ENCODE measurements at regions of chr16 and their contacts with region 1.

Region 1: DNA sequence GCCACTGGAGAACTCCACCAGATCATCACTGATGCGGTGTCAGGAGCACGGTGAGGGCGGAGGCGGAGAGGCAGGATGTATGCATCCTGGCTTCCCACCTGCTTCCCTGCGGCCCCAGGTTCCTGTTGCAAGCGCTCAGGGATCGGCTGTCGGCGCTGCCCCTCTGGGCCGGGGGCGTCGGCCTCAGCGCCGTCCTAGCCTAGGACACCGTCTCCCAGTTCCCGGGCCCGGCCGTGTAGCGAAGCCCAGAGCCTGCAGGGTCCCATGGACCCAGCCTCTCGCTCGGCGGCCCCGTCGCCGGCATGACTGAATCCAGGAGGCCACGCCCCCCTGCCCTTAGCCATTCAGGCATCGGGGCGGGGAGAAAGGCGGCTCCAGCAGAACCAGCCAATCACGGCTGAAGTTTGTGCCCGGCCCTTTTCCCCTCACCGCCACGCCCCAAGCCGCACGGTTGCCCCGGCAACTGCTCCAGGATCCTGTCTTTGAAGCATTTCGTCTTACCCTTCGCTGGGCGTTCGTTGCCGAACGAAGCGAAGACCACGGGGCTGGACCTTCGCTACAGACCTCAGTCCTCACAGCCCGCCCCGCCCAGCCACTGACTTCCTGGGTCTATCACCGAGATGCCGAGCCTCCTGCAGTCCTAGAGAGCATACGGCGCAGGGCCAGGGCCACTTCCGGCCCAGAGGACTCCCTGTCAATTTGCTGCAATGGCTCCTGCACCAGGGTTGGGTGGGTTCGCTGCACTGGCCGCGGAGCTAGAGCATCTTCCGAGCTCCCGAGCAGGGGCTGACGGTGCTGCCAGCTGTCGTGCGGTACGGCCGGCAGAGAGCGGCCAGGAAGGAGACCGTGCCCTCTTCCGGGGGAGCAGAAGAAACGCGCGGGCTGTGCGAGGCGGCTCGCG is 10.6 kb upstream of the ZNF213 start:
- DNase-seq: peak; percentile 99
- ATAC-seq: peak; percentile 92
- H3K4me3 Mint-ChIP-seq: peak overlapping the region; percentile 90
- H3K27ac Mint-ChIP-seq: peak overlapping the region; percentile 90
- H3K4me1 Mint-ChIP-seq: peaks cover 30% of the 10 kb centered on the region
- H3K27me3 Mint-ChIP-seq: no peaks in the 10 kb centered on the region

Region 2: DNA sequence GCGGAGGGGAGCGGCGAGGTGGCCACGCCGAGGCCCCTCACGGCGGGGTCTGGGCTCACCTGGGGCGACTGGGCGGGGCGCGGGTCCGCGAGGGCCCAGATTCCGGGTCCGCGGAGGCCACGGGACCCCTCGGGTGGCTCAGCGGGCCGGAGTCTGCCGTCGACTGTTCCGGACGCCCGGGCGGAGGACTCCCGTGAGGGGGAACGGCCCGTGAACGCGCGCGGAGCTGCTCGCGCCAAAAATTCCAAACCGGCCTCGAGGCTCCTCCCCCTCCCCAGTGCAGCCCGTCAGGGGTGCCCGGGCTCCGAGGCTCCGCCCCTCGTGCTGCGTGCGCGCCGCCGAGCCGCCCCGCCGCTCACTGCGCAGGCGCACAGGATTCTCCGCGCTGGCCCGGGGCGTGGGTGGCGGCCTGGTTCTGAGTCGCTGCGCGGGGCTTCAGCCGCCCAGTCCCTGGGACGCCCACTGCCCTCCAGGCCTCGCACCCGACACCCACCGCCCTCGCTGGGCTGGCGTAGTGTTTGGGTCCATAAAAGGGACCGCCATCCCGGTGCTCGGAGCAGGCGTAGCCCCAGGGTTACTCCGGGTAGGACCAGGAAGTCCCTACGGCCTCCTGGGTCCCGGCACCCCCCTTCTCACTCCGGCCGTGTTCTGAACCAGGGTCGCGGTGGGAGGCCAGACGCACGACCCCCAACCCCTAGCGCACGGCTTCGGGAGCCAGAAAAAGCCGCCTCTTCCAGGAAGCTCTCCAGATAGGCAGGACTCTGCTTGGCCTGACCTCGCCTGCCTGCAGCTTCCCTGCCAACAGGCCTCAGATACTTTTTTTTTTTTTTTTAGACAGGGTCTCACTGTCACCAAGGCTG is 143.8 kb before region 1 on chr16 and contains the start of gene PKMYT1:
- CTCF ChIA-PET with region 1: no interaction called
- POLR2A ChIA-PET with region 1: no interaction called
- intact Hi-C with region 1: loop called in 1 of 2 experiments (anchors 1 kb)
- DNase-seq: peak; percentile 97
- ATAC-seq: peak; percentile 91
- H3K4me3 Mint-ChIP-seq: peak within 1 kb of the TSS; percentile 87
- H3K27ac Mint-ChIP-seq: peak within 1 kb of the TSS; percentile 84
- H3K4me1 Mint-ChIP-seq: peaks cover 6% of the 10 kb centered on the region
- H3K27me3 Mint-ChIP-seq: peaks cover 2% of the 10 kb centered on the region
- total RNA-seq, gene PKMYT1: 101 to 117 TPM

Region 3: GRCh38 chr16:3094289-3095027 is 29.8 kb before region 1 on chr16:
- CTCF ChIA-PET with region 1: interaction called, 125 read pairs
- POLR2A ChIA-PET with region 1: no interaction called
- intact Hi-C with region 1: loop called in 1 of 2 experiments (anchors 1 kb)
- DNase-seq: peak; percentile 77
- ATAC-seq: peak; percentile 53
- H3K4me3 Mint-ChIP-seq: no peak overlapping the region
- H3K27ac Mint-ChIP-seq: peak overlapping the region; percentile 29
- H3K4me1 Mint-ChIP-seq: peaks cover 32% of the 10 kb centered on the region
- H3K27me3 Mint-ChIP-seq: no peaks in the 10 kb centered on the region

Region 4: GRCh38 chr16:3106205-3106928 is 17.9 kb before region 1 on chr16:
- CTCF ChIA-PET with region 1: interaction called, 125 read pairs
- POLR2A ChIA-PET with region 1: no interaction called
- intact Hi-C with region 1: loop called (anchors 1 kb)
- DNase-seq: peak; percentile 96
- ATAC-seq: peak; percentile 88
- H3K4me3 Mint-ChIP-seq: peak overlapping the region; percentile 76
- H3K27ac Mint-ChIP-seq: peak overlapping the region; percentile 94
- H3K4me1 Mint-ChIP-seq: peaks cover 31% of the 10 kb centered on the region
- H3K27me3 Mint-ChIP-seq: no peaks in the 10 kb centered on the region

Region 5: DNA sequence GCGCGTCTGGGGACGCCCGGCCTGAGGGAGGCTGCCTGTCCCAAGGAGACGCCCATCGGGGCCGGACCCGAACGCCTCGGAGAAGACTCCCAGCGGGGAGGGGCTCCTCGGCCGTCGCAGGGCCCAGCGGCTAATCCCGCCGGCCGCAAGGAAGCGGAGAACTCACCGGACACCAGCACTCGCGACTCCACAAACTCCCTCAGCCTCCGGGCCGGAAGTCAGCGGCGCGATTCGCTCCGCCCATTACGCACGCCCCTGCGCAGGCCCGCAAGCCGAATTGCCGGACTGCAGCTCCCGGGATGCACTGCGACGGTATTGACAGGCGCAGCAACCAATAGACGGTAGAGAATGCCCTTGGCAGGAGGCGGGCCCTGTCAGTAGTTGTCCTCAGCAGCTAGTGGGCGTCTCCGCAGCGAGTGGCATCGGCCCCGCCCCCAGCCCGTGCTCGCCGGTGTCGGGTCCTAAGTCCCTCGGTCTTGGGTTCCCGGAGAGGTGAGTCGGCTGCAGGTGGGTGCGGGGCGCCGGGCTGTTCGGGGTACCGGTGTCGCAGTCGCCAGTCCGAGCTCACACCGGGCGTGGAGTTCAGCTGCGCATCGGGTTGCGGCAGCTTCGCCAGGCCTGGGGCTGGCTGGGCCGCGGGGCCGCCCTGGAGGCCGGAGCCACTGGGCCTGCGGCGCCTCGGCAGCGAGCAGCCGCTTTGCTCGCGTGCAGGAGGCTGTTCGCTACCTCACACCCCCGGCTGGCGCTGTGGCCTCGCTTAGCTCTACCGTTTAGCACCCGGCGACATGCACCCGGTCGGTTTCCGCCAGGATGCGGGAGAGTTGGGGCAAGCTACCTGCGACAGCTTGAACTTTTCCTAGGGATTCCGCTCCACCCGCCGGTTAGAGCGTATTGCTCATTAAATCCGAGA is 276.8 kb after region 1 on chr16 and contains the starts of genes ZNF174 and ZSCAN32:
- CTCF ChIA-PET with region 1: no interaction called
- POLR2A ChIA-PET with region 1: no interaction called
- intact Hi-C with region 1: loop called in 1 of 2 experiments (anchors 1 kb)
- DNase-seq: peak; percentile 99
- ATAC-seq: peak; percentile 99
- H3K4me3 Mint-ChIP-seq: peak within 1 kb of the TSS; percentile 91
- H3K27ac Mint-ChIP-seq: peak within 1 kb of the TSS; percentile 83
- H3K4me1 Mint-ChIP-seq: peaks cover 49% of the 10 kb centered on the region
- H3K27me3 Mint-ChIP-seq: no peaks in the 10 kb centered on the region
- total RNA-seq, gene ZNF174: 7.4 to 9.5 TPM
- total RNA-seq, gene ZSCAN32: 15.7 to 17.4 TPM